ENCODE measurements at regions of chr1 and their contacts with region 1.

Region 1: GRCh38 chr1:171226747-171227370 is 21.4 kb upstream of the FMO1 start:
- DNase-seq: peak; percentile 47
- H3K4me3 ChIP-seq: no peak overlapping the region
- H3K27ac ChIP-seq: no peak overlapping the region
- H3K4me1 ChIP-seq: peaks cover 0 to 5% (median 0%) of the 10 kb centered on the region in 4 donors
- H3K27me3 ChIP-seq: no peaks in the 10 kb centered on the region
- CTCF ChIP-seq: peak; percentile 68 to 80 (median 71)
- EP300 ChIP-seq: no peak
- POLR2A ChIP-seq: no peak

Region 2: DNA sequence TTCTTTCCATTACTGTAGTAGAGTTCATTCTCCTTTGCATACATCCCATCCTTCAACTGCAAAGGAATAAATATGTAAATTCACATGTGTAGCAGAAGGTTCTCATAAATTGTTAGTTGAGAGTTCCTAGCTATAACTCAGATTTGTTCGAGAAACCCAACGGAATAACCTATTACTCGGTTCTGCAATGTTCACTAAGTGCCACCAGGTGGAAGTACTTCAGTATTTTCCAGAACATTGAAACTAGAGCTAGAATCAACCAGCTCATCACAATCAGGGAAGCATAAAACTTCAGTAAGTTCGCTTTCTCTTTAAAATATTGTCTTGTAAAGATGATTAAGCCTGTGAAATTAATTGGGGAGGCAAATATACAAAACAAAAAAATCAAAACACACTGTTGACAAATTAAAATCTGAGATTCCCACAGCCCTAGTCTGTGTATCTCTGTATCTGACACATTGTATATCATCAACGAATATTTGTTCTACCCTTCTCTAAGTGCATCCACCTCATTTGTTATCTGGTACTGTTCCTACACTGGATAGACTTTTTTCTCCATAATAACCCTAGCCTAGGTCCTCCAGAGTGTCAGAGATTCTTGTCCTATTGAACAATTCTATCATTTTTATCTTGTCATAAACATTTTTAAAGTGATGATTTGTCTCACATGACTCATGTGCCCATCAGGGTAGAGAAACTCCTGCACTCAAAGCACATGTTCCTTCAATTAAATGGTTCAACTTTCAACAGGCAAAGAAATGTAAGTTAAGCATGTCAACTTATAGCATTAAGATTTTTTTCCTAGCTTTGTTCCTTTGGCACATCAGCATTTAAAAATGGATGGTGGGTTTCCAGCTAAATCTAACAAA is 259.6 kb before region 1 on chr1:
- in situ Hi-C with region 1: loop called in 2 of 4 experiments (anchors 25 kb)
- intact Hi-C with region 1: no loop called
- DNase-seq: no peak
- H3K4me3 ChIP-seq: no peak overlapping the region
- H3K27ac ChIP-seq: no peak overlapping the region
- H3K4me1 ChIP-seq: no peaks in the 10 kb centered on the region
- H3K27me3 ChIP-seq: peaks cover 3% of the 10 kb centered on the region
- CTCF ChIP-seq: peak; percentile 50 to 70 (median 54)
- EP300 ChIP-seq: no peak
- POLR2A ChIP-seq: no peak

Region 3: DNA sequence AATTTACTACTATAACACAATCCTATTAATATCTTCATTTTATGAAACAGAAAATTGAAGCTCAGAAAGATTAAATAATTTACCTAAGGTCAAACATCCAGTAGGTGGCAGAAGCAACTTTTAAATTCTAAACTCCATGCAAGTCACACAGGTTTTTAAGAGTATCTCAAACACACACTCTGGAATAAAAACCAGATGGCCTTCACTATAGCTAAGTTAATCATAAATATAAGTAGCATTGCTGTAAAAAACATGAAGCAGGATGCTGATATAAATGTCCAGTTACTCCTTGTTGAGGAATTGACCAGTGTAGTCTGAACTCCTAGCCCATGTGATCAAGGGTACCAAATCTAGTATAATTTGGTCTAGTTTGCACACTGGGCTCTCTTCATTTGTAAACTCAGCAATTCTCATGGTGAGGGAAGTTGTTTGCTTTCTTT is 145.5 kb before region 1 on chr1:
- in situ Hi-C with region 1: loop called in 1 of 4 experiments (anchors 10 kb)
- intact Hi-C with region 1: loop called (anchors 2 kb)
- DNase-seq: no peak
- H3K4me3 ChIP-seq: no peak overlapping the region
- H3K27ac ChIP-seq: peak overlapping the region in 3 of 4 donors; percentile 38 to 60 (median 55)
- H3K4me1 ChIP-seq: peaks cover 0 to 17% (median 8%) of the 10 kb centered on the region in 4 donors
- H3K27me3 ChIP-seq: no peaks in the 10 kb centered on the region
- CTCF ChIP-seq: peak; percentile 33 to 46 (median 39)
- EP300 ChIP-seq: no peak
- POLR2A ChIP-seq: no peak

Region 4: GRCh38 chr1:171210355-171210754 is 16.5 kb before region 1 on chr1:
- in situ Hi-C with region 1: no loop called
- intact Hi-C with region 1: no loop called
- DNase-seq: no peak
- H3K4me3 ChIP-seq: no peak overlapping the region
- H3K27ac ChIP-seq: peak overlapping the region in 1 of 4 donors; percentile 2
- H3K4me1 ChIP-seq: peaks cover 0 to 15% (median 5%) of the 10 kb centered on the region in 4 donors
- H3K27me3 ChIP-seq: no peaks in the 10 kb centered on the region
- CTCF ChIP-seq: no peak
- EP300 ChIP-seq: no peak
- POLR2A ChIP-seq: no peak

Measured in transverse colon (tissue), 4 donors.